Testis (tissue), 5 donors: ENCODE measurements at regions of chr15 and their contacts with region 1.

Region 1: GRCh38 chr15:31488426-31489204 is 162.0 kb downstream of the KLF13 start:
- DNase-seq: peak; percentile 75
- H3K4me3 ChIP-seq: no peak overlapping the region
- H3K27ac ChIP-seq: peak overlapping the region in 1 of 2 donors; percentile 32
- H3K4me1 ChIP-seq: peaks cover 36% of the 10 kb centered on the region
- H3K27me3 ChIP-seq: no peaks in the 10 kb centered on the region
- CTCF ChIP-seq: peak; percentile 82 to 95 (median 89)
- POLR2A ChIP-seq: no peak

Region 2: GRCh38 chr15:30991255-30992072 is 497.2 kb before region 1 on chr15 and contains the start of gene MTMR10:
- intact Hi-C with region 1: loop called (anchors 10 kb)
- DNase-seq: peak; percentile 75
- H3K4me3 ChIP-seq: peak within 1 kb of the TSS; percentile 87 to 99
- H3K27ac ChIP-seq: peak within 1 kb of the TSS; percentile 93 to 95
- H3K4me1 ChIP-seq: peaks cover 10% of the 10 kb centered on the region
- H3K27me3 ChIP-seq: no peaks in the 10 kb centered on the region
- CTCF ChIP-seq: peak in 2 of 3 experiments; percentile 45
- POLR2A ChIP-seq: no peak
- total RNA-seq, gene MTMR10: 35.4 to 36.6 TPM

Region 3: DNA sequence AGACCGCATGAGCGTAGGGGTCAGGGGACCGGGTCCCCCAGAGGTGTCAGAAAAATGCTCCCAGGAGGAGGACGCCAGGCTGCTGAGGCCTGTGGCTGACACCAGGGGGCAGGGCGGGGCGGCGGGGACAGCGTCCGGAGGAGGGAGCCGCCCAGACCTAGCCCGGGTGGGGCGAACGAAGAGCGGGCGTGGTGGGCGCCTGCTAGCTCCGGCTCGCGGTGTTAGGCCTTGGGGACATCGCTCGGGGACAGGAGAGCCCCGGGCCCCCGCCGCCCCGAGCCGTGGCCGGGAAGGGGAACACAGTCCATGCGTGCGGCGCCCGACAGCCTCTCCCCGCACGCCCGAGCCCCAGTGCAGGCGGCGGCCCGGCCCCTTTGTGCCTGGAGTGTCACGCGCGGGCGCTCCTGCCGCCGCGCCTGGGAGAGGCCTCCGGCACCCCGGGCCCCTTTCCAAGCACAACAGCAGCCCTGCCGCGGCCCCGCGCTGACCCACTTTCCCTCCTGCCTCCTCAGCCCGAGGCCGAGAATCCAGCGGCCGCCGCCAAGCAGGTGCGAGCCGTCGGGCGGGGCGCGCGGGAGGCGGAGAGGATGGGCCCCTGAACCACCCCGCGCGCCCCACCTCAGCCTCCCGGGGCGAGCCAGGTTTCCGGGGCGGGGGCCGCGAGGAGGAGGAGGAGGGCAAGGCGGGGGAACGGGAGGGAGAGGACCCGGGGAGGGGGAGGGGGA is 273.0 kb before region 1 on chr15:
- intact Hi-C with region 1: loop called (anchors 5 kb)
- DNase-seq: peak; percentile 79
- H3K4me3 ChIP-seq: peak overlapping the region; percentile 33 to 68
- H3K27ac ChIP-seq: peak overlapping the region; percentile 83 to 87
- H3K4me1 ChIP-seq: peaks cover 18% of the 10 kb centered on the region
- H3K27me3 ChIP-seq: no peaks in the 10 kb centered on the region
- CTCF ChIP-seq: peak; percentile 81 to 88 (median 81)
- POLR2A ChIP-seq: no peak

Region 4: DNA sequence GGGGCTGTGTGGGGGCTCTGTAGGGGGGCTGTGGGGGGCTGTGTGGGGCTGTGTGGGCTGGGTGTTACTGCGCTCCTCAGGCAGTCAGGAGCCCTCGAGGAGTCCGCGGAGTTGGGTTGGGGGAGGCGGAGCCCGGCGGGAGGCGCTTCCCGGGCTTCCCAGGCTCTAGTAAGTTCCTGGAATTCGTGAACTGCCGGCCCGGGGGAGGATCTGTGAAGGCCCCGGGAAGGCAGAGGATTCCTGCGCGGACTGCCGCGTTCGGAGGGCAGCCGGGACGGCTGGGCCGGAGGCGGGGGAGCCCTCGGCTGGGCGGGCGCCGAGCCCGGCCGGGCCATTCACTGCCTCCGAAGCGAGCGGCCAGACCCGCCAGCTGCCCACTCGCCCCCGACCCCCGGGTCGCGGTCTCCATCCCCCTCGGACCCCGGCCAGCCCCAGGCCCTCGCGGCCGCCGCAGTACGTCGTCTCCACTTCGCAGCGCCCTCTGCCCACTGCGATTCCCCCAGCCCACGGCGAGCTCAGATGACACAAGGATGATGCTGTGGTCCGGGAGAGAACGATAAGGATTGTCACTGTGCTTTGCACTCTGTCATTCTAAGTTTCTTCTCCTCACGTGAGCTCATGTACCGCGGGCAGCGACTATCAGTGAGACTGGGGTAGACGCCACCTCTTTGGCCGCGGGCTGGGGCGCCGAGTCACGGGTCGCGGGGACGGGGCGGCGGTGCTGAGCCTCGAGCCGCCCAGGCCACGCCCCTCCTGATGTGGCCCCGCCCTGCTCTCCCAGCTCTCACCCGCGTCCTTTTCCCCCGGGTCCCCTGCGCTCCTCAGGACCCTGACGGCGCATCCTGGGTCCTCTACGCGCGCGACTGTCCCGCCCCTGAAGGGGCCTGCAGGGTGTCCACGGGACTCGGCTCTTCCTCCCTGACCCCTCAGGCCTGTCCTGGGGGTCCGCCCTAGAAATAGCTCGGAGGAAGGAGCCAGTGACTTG is 96.6 kb before region 1 on chr15:
- intact Hi-C with region 1: loop called (anchors 10 kb)
- DNase-seq: peak; percentile 91
- H3K4me3 ChIP-seq: peak overlapping the region; percentile 67 to 72
- H3K27ac ChIP-seq: peak overlapping the region; percentile 75 to 96
- H3K4me1 ChIP-seq: peaks cover 20% of the 10 kb centered on the region
- H3K27me3 ChIP-seq: no peaks in the 10 kb centered on the region
- CTCF ChIP-seq: no peak
- POLR2A ChIP-seq: peak; percentile 61